T-cell (primary cell): ENCODE measurements at regions of chr3 and their contacts with region 1.

Region 1: DNA sequence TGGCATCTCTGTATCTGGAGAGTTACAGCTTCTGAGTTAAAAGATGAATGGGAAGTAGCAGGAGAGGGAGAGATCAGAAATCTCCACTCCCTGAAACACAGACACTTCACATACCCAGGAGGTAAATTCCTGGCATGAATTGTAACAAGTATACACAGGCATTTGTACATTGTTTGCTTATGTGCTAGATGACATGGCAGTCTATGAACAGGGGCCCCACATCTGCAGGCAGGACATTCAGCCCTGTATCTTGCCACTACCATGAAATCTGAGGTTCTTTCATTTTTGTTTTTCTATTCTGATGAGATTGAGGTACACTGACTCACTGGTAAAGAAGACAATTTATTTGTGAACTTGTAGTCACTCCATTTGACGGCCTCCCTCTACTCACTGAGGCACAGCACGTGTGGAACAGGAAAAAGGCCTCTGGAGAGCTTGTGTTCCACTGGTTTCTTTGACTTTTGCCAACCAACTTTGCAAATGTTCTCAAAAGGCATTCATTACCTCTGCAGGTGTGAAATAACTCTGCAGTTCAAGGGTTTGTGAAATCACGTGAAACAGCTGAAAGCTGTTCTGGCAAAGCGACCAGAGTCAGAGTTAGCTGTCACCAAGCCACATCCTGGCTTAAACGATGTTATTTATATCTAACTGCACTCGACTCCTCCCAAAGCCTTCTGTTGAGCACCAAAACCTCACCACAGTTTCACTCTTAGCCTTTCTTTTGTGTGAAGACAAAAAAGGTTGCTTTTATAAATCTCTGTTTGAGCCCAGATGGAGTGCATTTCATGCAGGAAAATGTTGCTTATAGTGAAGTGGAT is 401.3 kb upstream of the CFAP20DC start:
- DNase-seq: peak; percentile 39 to 87 (median 67)
- ATAC-seq: peak; percentile 96 to 97 (median 96)
- H3K4me3 ChIP-seq: peak overlapping the region in 1 of 2 donors; percentile 18
- H3K4me3 Mint-ChIP-seq: peak overlapping the region; percentile 54 to 70 (median 56)
- H3K27ac ChIP-seq: peak overlapping the region; percentile 96
- H3K27ac Mint-ChIP-seq: peak overlapping the region; percentile 95 to 98
- H3K4me1 ChIP-seq: peaks cover 42 to 44% of the 10 kb centered on the region in 2 experiments
- H3K4me1 Mint-ChIP-seq: peaks cover 78 to 83% (median 81%) of the 10 kb centered on the region in 3 donors
- H3K27me3 ChIP-seq: no peaks in the 10 kb centered on the region
- H3K27me3 Mint-ChIP-seq: no peaks in the 10 kb centered on the region

Region 2: DNA sequence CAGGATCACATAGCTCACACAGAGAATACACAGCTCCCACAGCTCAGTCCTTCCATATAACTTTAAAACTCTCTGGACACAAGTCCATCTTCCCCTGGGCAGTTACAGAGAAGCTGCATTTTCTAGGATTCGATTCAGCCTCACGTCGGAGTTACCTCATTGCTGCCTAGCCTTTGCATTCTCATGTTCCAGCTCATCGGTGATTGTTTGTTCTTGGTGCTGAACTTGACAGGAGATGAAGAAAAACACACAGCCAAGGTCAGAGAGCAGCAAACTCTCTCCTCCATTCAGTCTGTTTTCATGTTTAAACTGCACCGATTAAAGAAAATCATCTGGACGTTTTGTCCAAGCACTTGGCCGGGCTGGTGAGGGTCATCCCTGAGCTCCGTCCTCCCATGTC is 25.8 kb before region 1 on chr3:
- CTCF ChIA-PET with region 1: interaction called in 1 of 2 experiments, 9 read pairs
- POLR2A ChIA-PET with region 1: interaction called in 1 of 2 experiments, 11 read pairs
- DNase-seq: no peak
- ATAC-seq: no peak
- H3K4me3 ChIP-seq: no peak overlapping the region
- H3K4me3 Mint-ChIP-seq: peak overlapping the region in 2 of 3 donors; percentile 29 to 52
- H3K27ac ChIP-seq: peak overlapping the region; percentile 57
- H3K27ac Mint-ChIP-seq: peak overlapping the region; percentile 83 to 89
- H3K4me1 ChIP-seq: peaks cover 37 to 44% of the 10 kb centered on the region in 2 experiments
- H3K4me1 Mint-ChIP-seq: peaks cover 54 to 64% (median 54%) of the 10 kb centered on the region in 3 donors
- H3K27me3 ChIP-seq: no peaks in the 10 kb centered on the region
- H3K27me3 Mint-ChIP-seq: no peaks in the 10 kb centered on the region